ENCODE measurements at regions of chr2 and their contacts with region 1.

Region 1: GRCh38 chr2:54558188-54559005 is 102.3 kb downstream of the SPTBN1 start:
- DNase-seq: peak; percentile 74 to 85 (median 75)
- H3K4me3 ChIP-seq: peak overlapping the region; percentile 94 to 99
- H3K4me3 Mint-ChIP-seq: peak overlapping the region; percentile 94 to 100 (median 98)
- H3K27ac ChIP-seq: peak overlapping the region; percentile 83
- H3K27ac Mint-ChIP-seq: peak overlapping the region; percentile 88 to 97 (median 94)
- H3K4me1 ChIP-seq: peaks cover 32% of the 10 kb centered on the region
- H3K4me1 Mint-ChIP-seq: peaks cover 34 to 68% (median 40%) of the 10 kb centered on the region in 4 donors
- H3K27me3 ChIP-seq: no peaks in the 10 kb centered on the region
- H3K27me3 Mint-ChIP-seq: no peaks in the 10 kb centered on the region

Region 2: GRCh38 chr2:54570925-54571694 is 12.7 kb after region 1 on chr2:
- CTCF ChIA-PET with region 1: interaction called, 199 read pairs
- POLR2A ChIA-PET with region 1: interaction called, 665 read pairs
- intact Hi-C with region 1: loop called (anchors 1 kb)
- DNase-seq: peak; percentile 63 to 87 (median 72)
- H3K4me3 ChIP-seq: peak overlapping the region in 1 of 2 donors; percentile 11
- H3K4me3 Mint-ChIP-seq: peak overlapping the region; percentile 43 to 95 (median 80)
- H3K27ac ChIP-seq: peak overlapping the region; percentile 94
- H3K27ac Mint-ChIP-seq: peak overlapping the region; percentile 93 to 99 (median 99)
- H3K4me1 ChIP-seq: peaks cover 96% of the 10 kb centered on the region
- H3K4me1 Mint-ChIP-seq: peaks cover 64 to 99% (median 84%) of the 10 kb centered on the region in 4 donors
- H3K27me3 ChIP-seq: no peaks in the 10 kb centered on the region
- H3K27me3 Mint-ChIP-seq: no peaks in the 10 kb centered on the region

Region 3: DNA sequence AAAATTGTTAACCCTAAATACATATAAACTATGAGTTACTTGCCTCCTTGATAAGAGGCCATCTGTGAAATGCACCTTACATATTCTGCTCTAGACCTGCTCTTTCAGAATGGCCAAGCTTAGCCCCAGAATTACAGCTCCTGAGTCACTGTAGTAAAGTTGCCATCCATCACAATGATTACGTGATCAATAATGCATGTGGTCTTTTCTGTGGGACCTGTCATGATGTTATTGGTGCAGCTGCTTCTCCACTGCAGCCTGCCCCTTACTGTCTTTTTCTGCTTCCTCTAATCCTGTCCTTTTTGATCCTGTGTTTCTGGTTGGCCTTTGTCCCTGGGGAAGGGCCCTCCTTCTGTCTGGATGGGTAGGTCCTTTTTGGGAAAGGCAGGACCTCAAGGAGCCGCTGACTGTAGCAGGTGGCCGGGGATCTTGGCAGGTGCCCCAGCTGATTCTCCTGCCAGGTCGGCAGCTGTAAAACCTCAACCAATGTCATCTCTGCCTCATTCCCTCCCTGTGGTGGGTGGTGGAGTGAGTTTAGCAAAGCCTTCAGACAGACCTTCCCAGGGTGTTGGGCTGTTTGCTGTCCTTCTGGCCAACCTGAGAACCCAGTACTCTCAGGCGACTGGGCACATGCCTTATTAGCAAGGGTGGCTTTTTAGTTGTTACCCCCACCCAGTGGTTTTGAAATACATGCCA is 38.9 kb after region 1 on chr2:
- CTCF ChIA-PET with region 1: interaction called, 47 read pairs
- POLR2A ChIA-PET with region 1: interaction called, 304 read pairs
- intact Hi-C with region 1: loop called (anchors 2 kb)
- DNase-seq: peak in 1 of 5 donors; percentile 32
- H3K4me3 ChIP-seq: peak overlapping the region in 1 of 2 donors; percentile 18
- H3K4me3 Mint-ChIP-seq: peak overlapping the region; percentile 52 to 90 (median 86)
- H3K27ac ChIP-seq: peak overlapping the region; percentile 48
- H3K27ac Mint-ChIP-seq: peak overlapping the region; percentile 92 to 98 (median 97)
- H3K4me1 ChIP-seq: peaks cover 89% of the 10 kb centered on the region
- H3K4me1 Mint-ChIP-seq: peaks cover 64 to 87% (median 83%) of the 10 kb centered on the region in 4 donors
- H3K27me3 ChIP-seq: no peaks in the 10 kb centered on the region
- H3K27me3 Mint-ChIP-seq: no peaks in the 10 kb centered on the region

Region 4: DNA sequence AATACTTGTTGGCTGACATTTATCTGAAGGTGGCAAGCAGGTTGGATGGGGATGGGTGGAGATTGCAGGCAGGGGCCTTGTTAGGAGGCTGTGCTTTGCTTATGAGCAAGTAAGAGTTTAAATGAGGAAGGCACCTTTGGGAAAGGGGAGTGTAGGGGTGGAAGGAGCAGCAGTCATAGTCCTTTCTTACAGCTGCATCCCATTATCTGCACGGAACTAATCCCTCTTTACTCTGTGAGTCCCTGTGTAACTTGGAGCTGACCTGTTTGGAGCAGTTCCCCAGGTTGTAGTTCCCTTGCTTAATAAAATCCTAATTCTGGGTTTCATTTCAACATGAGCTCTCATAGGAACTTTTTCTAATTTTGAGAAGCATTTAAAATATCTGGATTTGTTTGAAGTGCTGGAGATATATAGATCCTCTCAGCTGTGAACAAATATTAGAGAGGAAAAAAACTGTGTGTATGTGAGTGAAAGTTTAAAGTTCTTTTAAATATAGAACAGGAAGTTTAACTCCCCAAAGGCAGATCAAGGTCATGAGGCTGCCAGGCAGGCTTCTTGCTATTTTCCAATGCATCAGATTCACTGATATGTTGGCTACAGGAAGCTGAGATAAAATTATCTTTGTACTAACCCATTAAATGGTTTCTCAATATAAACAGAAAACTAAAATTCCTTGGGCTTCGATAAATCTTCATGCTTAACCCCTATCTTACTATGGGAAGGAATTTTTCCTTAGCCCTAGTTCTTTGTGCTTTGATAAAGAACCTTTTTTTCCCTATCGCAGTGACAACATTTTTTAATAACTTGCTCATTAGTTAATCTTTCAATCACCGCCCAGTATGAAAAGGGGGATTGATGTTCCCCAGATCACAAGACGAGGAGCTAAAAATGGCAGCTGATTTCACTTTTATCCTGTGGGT is 60.5 kb after region 1 on chr2:
- CTCF ChIA-PET with region 1: interaction called, 12 read pairs
- POLR2A ChIA-PET with region 1: interaction called, 16 read pairs
- intact Hi-C with region 1: no loop called
- DNase-seq: no peak
- H3K4me3 ChIP-seq: no peak overlapping the region
- H3K4me3 Mint-ChIP-seq: peak overlapping the region in 3 of 8 donors; percentile 3 to 46 (median 37)
- H3K27ac ChIP-seq: no peak overlapping the region
- H3K27ac Mint-ChIP-seq: peak overlapping the region; percentile 10 to 89 (median 68)
- H3K4me1 ChIP-seq: peaks cover 17% of the 10 kb centered on the region
- H3K4me1 Mint-ChIP-seq: peaks cover 19 to 36% (median 24%) of the 10 kb centered on the region in 4 donors
- H3K27me3 ChIP-seq: no peaks in the 10 kb centered on the region
- H3K27me3 Mint-ChIP-seq: no peaks in the 10 kb centered on the region

Region 5: DNA sequence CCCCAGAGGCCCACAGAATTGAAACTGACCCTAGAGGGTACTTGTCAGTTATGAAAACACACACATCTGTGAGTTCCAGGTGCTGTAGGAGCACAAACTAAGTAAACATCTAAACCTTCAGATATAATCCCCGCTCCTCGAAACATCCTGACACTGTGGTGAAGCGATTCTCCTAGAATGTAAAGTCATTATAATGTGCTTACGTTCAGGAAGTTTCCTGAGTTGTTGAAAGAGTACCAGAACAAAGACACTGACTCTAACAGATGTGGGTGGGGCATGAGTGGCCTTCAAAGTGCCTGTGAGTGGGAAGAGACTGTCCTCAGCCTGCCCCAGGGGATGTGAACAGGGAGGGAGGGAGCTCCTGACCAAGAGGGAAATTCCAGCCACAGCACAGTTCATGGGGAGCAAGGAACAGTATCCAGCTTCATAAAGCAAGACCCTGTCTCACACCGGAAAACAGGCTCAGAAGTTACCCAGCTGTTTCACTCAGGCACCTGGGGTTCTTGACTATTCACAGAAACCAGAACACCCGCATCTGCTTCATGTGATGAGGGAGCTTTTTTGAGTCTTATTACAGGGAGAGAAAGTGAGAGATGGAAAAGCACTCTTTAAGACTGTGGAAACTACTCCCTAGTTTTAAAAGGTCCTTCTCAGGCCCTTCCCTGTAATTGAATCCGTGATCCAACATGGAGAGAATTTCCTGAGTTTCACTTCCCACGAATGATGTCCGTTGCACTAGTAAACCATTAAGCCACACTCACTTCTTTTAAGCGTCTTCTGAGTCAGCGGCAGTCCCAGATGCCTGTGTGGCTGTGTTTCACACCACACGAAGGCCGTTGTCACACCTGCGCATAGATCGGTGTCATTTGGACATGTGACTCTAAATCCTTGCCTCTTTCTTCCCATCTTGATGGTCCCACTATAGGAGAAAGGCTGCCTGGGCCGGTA is 76.4 kb after region 1 on chr2:
- CTCF ChIA-PET with region 1: interaction called, 11 read pairs
- POLR2A ChIA-PET with region 1: interaction called, 12 read pairs
- intact Hi-C with region 1: loop called (anchors 5 kb)
- DNase-seq: peak in 4 of 5 donors; percentile 5 to 33 (median 18)
- H3K4me3 ChIP-seq: no peak overlapping the region
- H3K4me3 Mint-ChIP-seq: peak overlapping the region in 7 of 8 donors; percentile 18 to 66 (median 50)
- H3K27ac ChIP-seq: no peak overlapping the region
- H3K27ac Mint-ChIP-seq: peak overlapping the region; percentile 68 to 88 (median 76)
- H3K4me1 ChIP-seq: peaks cover 14% of the 10 kb centered on the region
- H3K4me1 Mint-ChIP-seq: peaks cover 21 to 50% (median 26%) of the 10 kb centered on the region in 4 donors
- H3K27me3 ChIP-seq: no peaks in the 10 kb centered on the region
- H3K27me3 Mint-ChIP-seq: no peaks in the 10 kb centered on the region

Region 6: GRCh38 chr2:54678719-54679118 is 120.3 kb after region 1 on chr2:
- CTCF ChIA-PET with region 1: no interaction called
- POLR2A ChIA-PET with region 1: no interaction called
- intact Hi-C with region 1: no loop called
- DNase-seq: no peak
- H3K4me3 ChIP-seq: no peak overlapping the region
- H3K4me3 Mint-ChIP-seq: no peak overlapping the region
- H3K27ac ChIP-seq: no peak overlapping the region
- H3K27ac Mint-ChIP-seq: no peak overlapping the region
- H3K4me1 ChIP-seq: peaks cover 10% of the 10 kb centered on the region
- H3K4me1 Mint-ChIP-seq: peaks cover 10 to 24% (median 18%) of the 10 kb centered on the region in 4 donors
- H3K27me3 ChIP-seq: no peaks in the 10 kb centered on the region
- H3K27me3 Mint-ChIP-seq: no peaks in the 10 kb centered on the region

Region 7: GRCh38 chr2:55232084-55232862 is 673.9 kb after region 1 on chr2 and contains the starts of genes CLHC1 and RPS27A:
- CTCF ChIA-PET with region 1: no interaction called
- POLR2A ChIA-PET with region 1: no interaction called
- intact Hi-C with region 1: loop called (anchors 10 kb)
- DNase-seq: peak; percentile 92 to 96 (median 94)
- H3K4me3 ChIP-seq: peak within 1 kb of the TSS; percentile 82 to 98
- H3K4me3 Mint-ChIP-seq: peak within 1 kb of the TSS; percentile 92 to 100 (median 100)
- H3K27ac ChIP-seq: peak within 1 kb of the TSS; percentile 97
- H3K27ac Mint-ChIP-seq: peak within 1 kb of the TSS; percentile 94 to 100 (median 98)
- H3K4me1 ChIP-seq: peaks cover 52% of the 10 kb centered on the region
- H3K4me1 Mint-ChIP-seq: peaks cover 46 to 75% (median 62%) of the 10 kb centered on the region in 4 donors
- H3K27me3 ChIP-seq: no peaks in the 10 kb centered on the region
- H3K27me3 Mint-ChIP-seq: no peaks in the 10 kb centered on the region
- total RNA-seq, gene CLHC1: 12.4 to 14.2 TPM
- total RNA-seq, gene RPS27A: 2,280 to 2,392 TPM